Activated CD4-positive, alpha-beta memory T cell treated with anti-CD3 and anti-CD28 coated beads, Interleukin-2, amount 10 ng/mL, durations not matched to agents 7 days and 5 days (primary cell): ENCODE measurements at regions of chr1 and their contacts with region 1.

Region 1: DNA sequence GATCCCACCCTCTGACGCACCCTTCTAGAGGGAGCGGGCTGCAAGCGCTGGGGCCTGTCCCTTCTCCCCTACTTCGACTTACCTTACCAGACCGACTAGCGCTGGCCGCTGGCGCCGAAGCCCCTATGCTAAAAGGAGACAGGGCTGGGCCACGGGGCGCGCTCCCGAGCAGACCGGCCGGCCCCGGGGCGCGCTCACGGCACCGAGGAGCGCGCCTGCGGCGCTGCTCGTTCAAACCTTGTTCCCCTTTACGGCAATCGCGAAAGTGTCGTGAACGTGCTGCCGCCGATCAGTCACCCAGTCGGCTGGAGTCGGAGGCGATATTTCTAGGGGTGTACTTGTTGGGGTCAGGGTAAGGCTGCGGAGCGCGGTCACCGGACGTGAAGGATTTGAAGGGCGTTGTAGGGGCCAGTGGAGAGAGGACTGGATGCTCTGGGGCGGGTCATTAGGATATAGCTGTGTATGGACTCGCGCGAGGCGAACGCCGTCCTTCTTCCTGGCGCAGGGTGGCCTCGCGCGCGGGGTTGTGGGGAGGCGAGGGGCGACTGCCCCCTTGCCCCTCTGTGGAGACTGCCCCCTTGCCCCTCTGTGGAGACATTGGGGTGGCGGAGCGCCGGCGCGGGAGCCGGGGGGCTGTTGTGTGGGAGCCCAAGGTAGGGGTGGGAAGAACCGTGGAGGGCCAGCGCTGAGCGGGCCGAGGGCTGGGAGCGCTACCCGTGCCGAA is at the starts of genes CEPT1 and DRAM2:
- DNase-seq: peak; percentile 94
- H3K4me3 Mint-ChIP-seq: peak within 1 kb of the TSS; percentile 99
- H3K27ac Mint-ChIP-seq: peak within 1 kb of the TSS; percentile 86
- H3K4me1 Mint-ChIP-seq: peaks cover 50% of the 10 kb centered on the region
- H3K27me3 Mint-ChIP-seq: no peaks in the 10 kb centered on the region
- total RNA-seq, gene CEPT1: 31.0 to 32.5 TPM
- total RNA-seq, gene DRAM2: 33.0 to 38.0 TPM

Region 2: GRCh38 chr1:111197598-111198284 is 57.6 kb after region 1 on chr1:
- CTCF ChIA-PET with region 1: interaction called, 4 read pairs
- POLR2A ChIA-PET with region 1: interaction called, 16 read pairs
- DNase-seq: peak; percentile 71
- H3K4me3 Mint-ChIP-seq: peak overlapping the region; percentile 96
- H3K27ac Mint-ChIP-seq: peak overlapping the region; percentile 93
- H3K4me1 Mint-ChIP-seq: peaks cover 77% of the 10 kb centered on the region
- H3K27me3 Mint-ChIP-seq: no peaks in the 10 kb centered on the region

Region 3: GRCh38 chr1:111214074-111214801 is 74.1 kb after region 1 on chr1:
- CTCF ChIA-PET with region 1: interaction called, 3 read pairs
- POLR2A ChIA-PET with region 1: interaction called, 23 read pairs
- DNase-seq: no peak
- H3K4me3 Mint-ChIP-seq: peak overlapping the region; percentile 52
- H3K27ac Mint-ChIP-seq: peak overlapping the region; percentile 97
- H3K4me1 Mint-ChIP-seq: peaks cover 73% of the 10 kb centered on the region
- H3K27me3 Mint-ChIP-seq: no peaks in the 10 kb centered on the region

Region 4: GRCh38 chr1:111281411-111281810 is 141.3 kb after region 1 on chr1:
- CTCF ChIA-PET with region 1: no interaction called
- POLR2A ChIA-PET with region 1: no interaction called
- DNase-seq: no peak
- H3K4me3 Mint-ChIP-seq: no peak overlapping the region
- H3K27ac Mint-ChIP-seq: no peak overlapping the region
- H3K4me1 Mint-ChIP-seq: peaks cover 10% of the 10 kb centered on the region
- H3K27me3 Mint-ChIP-seq: no peaks in the 10 kb centered on the region